ENCODE measurements at regions of chr6 and their contacts with region 1.

Region 1: GRCh38 chr6:119349323-119350042 is at the start of gene MAN1A1:
- DNase-seq: peak; percentile 91
- ATAC-seq: peak; percentile 91
- H3K4me3 Mint-ChIP-seq: peak within 1 kb of the TSS; percentile 76
- H3K27ac Mint-ChIP-seq: peak within 1 kb of the TSS; percentile 82
- H3K4me1 Mint-ChIP-seq: peaks cover 48% of the 10 kb centered on the region
- H3K27me3 Mint-ChIP-seq: no peaks in the 10 kb centered on the region
- total RNA-seq, gene MAN1A1: 13.7 to 13.9 TPM

Region 2: GRCh38 chr6:119147101-119148053 is 202.1 kb before region 1 on chr6:
- CTCF ChIA-PET with region 1: interaction called, 20 read pairs
- POLR2A ChIA-PET with region 1: interaction called, 4 read pairs
- DNase-seq: peak; percentile 60
- ATAC-seq: peak; percentile 81
- H3K4me3 Mint-ChIP-seq: no peak overlapping the region
- H3K27ac Mint-ChIP-seq: peak overlapping the region; percentile 75
- H3K4me1 Mint-ChIP-seq: peaks cover 50% of the 10 kb centered on the region
- H3K27me3 Mint-ChIP-seq: peaks cover 6% of the 10 kb centered on the region

Region 3: GRCh38 chr6:119296036-119297035 is 53.1 kb before region 1 on chr6:
- CTCF ChIA-PET with region 1: no interaction called
- POLR2A ChIA-PET with region 1: no interaction called
- DNase-seq: no peak
- ATAC-seq: no peak
- H3K4me3 Mint-ChIP-seq: no peak overlapping the region
- H3K27ac Mint-ChIP-seq: no peak overlapping the region
- H3K4me1 Mint-ChIP-seq: peaks cover 16% of the 10 kb centered on the region
- H3K27me3 Mint-ChIP-seq: no peaks in the 10 kb centered on the region